Activated B cell treated with CpG ODN at 0.5 μM for 24 hours (primary cell): ENCODE measurements at regions of chr17 and their contacts with region 1.

Region 1: DNA sequence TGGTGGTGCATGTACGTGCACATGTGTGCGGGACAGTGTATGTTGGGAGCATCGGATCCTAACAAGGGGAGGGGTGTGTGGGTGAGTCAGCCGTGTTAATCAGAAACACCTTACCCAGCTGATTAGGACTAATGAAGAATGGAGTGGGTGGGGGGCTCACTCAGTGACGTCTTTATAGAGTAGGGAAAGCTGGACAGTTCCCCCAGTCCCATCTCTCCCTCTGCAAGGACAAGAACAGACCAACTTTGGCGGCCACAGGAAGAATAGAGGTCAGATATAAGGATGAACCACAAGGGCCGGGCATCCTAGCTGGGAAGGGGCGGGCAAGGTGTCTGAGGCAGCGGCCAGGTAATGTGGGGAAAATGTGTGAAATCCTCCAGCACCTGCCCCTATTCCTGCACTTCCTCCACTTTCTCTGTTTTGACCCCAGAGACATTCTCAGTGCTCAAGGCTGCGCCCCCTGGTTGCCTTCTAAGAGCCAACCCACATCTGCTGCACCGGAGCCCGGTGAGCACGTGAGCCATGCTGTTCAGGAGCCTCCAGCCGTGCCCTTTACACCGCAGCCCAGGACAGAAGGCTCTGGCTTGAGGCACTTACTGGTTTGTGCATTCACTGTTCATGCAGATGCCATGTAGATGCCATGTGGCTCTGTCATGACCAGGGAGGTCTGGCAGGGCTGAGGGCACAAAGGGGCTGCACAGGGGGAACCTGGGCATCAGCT is 18.9 kb upstream of the TBX21 start:
- DNase-seq: no peak
- ATAC-seq: peak; percentile 38
- H3K4me3 Mint-ChIP-seq: peak overlapping the region; percentile 44
- H3K27ac Mint-ChIP-seq: no peak overlapping the region
- H3K4me1 Mint-ChIP-seq: peaks cover 74% of the 10 kb centered on the region
- H3K27me3 Mint-ChIP-seq: no peaks in the 10 kb centered on the region
- CTCF ChIP-seq: no peak

Region 2: DNA sequence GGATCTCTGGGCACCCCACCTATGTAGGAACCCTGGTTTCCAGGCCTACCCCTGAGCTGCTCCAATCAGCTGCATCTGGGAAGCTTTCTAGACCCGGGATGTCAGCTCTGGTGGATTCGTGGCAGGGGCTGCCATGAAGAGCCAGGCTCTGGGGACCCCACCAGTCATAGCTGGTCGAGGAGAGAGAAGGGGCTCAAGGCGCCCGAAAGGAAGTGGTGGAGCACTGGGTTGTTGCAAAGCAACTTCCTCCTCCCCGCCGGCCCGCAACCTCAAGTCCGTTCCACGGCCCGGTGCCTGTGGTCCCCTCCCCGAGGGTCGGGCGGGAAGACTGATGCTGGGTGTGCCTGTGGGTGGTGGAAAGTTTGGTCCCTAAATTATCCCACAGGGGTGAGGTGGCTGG is 10.0 kb before region 1 on chr17:
- CTCF ChIA-PET with region 1: interaction called, 12 read pairs
- POLR2A ChIA-PET with region 1: interaction called, 15 read pairs
- intact Hi-C with region 1: loop called (anchors 1 kb)
- DNase-seq: peak; percentile 48
- ATAC-seq: peak; percentile 67
- H3K4me3 Mint-ChIP-seq: peak overlapping the region; percentile 73
- H3K27ac Mint-ChIP-seq: peak overlapping the region; percentile 65
- H3K4me1 Mint-ChIP-seq: peaks cover 58% of the 10 kb centered on the region
- H3K27me3 Mint-ChIP-seq: no peaks in the 10 kb centered on the region
- CTCF ChIP-seq: no peak